ENCODE measurements at regions of chr11 and their contacts with region 1.

Region 1: DNA sequence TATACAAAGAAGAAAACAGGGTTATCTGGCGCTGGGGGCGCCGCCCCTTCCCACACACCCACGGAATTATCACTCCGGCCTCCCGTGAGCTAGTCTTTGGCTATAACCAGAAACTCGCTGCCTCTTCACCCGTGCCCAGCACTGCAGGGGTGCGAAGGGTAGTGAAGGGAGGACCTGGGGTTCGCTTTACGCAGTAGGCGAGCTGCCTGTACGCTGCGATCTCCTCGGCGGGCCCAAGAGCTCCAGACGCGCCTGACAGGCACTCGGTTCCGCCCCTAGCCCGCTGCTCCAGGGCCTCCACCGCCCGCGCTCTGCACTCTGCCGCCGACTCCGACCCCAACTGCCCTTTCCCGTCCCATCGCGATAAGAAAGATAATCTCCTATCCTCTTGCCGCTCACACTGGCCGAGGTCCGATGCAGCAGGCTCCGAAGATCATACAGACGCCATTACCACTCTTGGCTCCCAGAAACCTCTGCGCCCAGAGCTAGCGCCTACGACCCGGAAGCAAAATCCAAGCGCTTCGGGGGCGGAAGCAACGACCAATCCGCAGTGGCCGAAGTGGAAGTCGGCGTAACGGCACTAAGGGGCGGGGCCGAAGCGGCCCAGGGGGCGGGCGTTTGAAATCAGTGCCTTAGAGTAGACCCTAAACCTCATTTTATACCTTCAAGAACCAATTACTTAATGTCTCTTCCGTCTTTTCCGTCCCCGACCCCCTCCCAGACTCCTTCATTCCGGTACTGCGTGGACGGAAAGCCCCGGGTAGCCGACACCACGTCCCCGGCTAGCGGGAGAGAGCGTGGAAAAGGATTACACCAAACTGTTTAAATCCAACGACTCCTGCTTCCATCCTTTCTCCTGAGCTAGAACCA is at the starts of genes CWC15 and KDM4D:
- DNase-seq: peak; percentile 97
- H3K4me3 Mint-ChIP-seq: peak within 1 kb of the TSS; percentile 97
- H3K27ac Mint-ChIP-seq: peak within 1 kb of the TSS; percentile 89
- H3K4me1 Mint-ChIP-seq: peaks cover 38% of the 10 kb centered on the region
- H3K27me3 Mint-ChIP-seq: no peaks in the 10 kb centered on the region
- total RNA-seq, gene CWC15: 70.6 to 72.3 TPM
- total RNA-seq, gene KDM4D: 1.7 to 2.1 TPM

Region 2: GRCh38 chr11:93741094-93741881 is 1232.0 kb before region 1 on chr11 and contains the starts of genes C11orf54 and TAF1D:
- CTCF ChIA-PET with region 1: no interaction called
- intact Hi-C with region 1: loop called (anchors 2 kb)
- DNase-seq: peak; percentile 97
- H3K4me3 Mint-ChIP-seq: peak within 1 kb of the TSS; percentile 93
- H3K27ac Mint-ChIP-seq: peak within 1 kb of the TSS; percentile 97
- H3K4me1 Mint-ChIP-seq: peaks cover 44% of the 10 kb centered on the region
- H3K27me3 Mint-ChIP-seq: no peaks in the 10 kb centered on the region
- total RNA-seq, gene C11orf54: 15.1 to 16.3 TPM
- total RNA-seq, gene TAF1D: 442 to 482 TPM

Region 3: DNA sequence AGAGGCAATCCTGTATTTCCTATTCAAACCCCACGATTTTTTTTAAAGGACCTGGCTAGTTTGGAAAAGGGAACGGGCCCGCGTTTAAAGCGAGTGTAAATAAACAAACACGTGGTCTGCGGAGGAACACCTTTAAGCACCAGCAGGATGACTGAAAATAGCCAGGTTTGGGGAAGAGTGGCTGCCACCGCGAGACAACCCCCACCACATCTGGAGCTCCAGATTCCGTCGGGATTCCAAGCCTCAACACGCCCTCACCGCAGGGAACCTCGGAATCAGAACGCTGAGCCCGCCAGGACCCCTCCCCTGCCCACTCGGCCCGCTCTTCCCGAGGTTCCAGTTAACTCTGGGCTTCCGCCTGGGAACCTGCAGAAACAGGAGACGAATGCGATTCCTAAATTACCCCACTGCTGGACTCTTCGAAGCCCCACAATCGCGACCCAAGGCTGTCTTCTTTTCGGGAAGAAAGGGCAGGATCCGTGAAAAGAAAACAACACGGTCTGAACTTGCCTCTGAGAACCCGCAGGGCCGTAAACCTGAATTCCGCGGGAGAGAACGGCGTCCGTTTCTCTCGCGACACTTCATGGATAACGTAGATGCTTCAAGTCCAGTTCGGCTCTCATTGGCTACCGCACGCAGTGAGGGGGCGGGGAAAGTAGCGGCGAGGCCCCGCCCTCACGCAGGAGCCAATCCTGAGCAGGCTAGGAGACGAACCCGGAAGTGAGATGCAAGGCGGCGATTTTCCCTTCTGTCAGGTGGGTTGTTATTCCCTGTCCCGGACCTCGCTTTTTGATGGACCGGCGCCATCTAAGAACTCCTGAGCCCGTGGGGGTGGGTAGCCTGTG is 479.8 kb before region 1 on chr11 and contains the starts of genes ANKRD49 and MRE11:
- CTCF ChIA-PET with region 1: no interaction called
- intact Hi-C with region 1: loop called (anchors 5 kb)
- DNase-seq: peak; percentile 97
- H3K4me3 Mint-ChIP-seq: peak within 1 kb of the TSS; percentile 93
- H3K27ac Mint-ChIP-seq: peak within 1 kb of the TSS; percentile 95
- H3K4me1 Mint-ChIP-seq: peaks cover 25% of the 10 kb centered on the region
- H3K27me3 Mint-ChIP-seq: no peaks in the 10 kb centered on the region
- total RNA-seq, gene ANKRD49: 16.3 to 19.1 TPM
- total RNA-seq, gene MRE11: 33.1 to 37.3 TPM

Region 4: DNA sequence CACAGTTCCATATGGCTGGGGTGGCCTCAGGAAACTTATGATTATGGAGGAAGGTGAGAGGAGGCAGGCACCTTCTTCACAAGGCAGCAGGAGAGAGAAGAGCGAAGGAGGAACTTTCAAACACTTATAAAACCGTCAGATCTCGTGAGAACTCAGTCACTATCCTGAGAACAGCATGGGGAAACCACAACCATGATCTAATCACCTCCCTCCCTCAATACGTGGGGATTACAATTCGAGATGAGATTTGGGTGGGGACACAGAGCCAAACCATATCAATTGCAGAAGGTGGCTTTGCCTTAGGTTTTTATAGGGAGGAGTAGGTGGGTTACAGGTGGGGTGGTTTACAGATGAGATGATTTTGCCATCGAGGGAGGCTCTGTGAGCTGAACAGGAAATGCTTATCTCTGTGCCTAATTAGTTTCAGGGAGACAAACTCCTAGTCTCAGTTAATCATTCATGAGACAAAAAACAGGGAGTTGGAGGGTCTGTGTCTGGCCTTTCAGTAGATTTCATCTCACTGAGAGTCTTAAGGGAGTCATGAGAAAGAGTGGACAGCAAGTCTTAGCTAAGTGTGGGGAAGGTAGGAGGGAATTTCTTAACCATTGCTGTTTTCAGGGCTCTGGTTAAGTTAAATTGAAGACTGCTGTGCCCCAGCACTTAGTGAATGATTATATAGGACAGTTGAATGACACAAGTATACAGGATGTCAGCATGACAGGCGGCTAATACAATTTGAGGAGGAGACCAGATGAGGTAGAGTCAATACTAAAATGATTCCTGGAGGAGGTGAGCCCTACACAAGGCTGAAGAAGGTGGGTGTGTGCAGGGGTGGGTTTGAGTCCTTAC is 47.7 kb before region 1 on chr11:
- CTCF ChIA-PET with region 1: interaction called, 3 read pairs
- intact Hi-C with region 1: loop called (anchors 1 kb)
- DNase-seq: no peak
- H3K4me3 Mint-ChIP-seq: no peak overlapping the region
- H3K27ac Mint-ChIP-seq: peak overlapping the region; percentile 26
- H3K4me1 Mint-ChIP-seq: peaks cover 42% of the 10 kb centered on the region
- H3K27me3 Mint-ChIP-seq: no peaks in the 10 kb centered on the region

Region 5: GRCh38 chr11:94988748-94989147 is 15.4 kb after region 1 on chr11:
- CTCF ChIA-PET with region 1: no interaction called
- intact Hi-C with region 1: no loop called
- DNase-seq: no peak
- H3K4me3 Mint-ChIP-seq: no peak overlapping the region
- H3K27ac Mint-ChIP-seq: no peak overlapping the region
- H3K4me1 Mint-ChIP-seq: no peaks in the 10 kb centered on the region
- H3K27me3 Mint-ChIP-seq: peaks cover 18% of the 10 kb centered on the region

Region 6: GRCh38 chr11:95705485-95706124 is 732.3 kb after region 1 on chr11:
- CTCF ChIA-PET with region 1: no interaction called
- intact Hi-C with region 1: loop called (anchors 10 kb)
- DNase-seq: peak; percentile 95
- H3K4me3 Mint-ChIP-seq: no peak overlapping the region
- H3K27ac Mint-ChIP-seq: no peak overlapping the region
- H3K4me1 Mint-ChIP-seq: peaks cover 16% of the 10 kb centered on the region
- H3K27me3 Mint-ChIP-seq: no peaks in the 10 kb centered on the region